CD8-positive, alpha-beta memory T cell (primary cell): ENCODE measurements at regions of chr14 and their contacts with region 1.

Region 1: DNA sequence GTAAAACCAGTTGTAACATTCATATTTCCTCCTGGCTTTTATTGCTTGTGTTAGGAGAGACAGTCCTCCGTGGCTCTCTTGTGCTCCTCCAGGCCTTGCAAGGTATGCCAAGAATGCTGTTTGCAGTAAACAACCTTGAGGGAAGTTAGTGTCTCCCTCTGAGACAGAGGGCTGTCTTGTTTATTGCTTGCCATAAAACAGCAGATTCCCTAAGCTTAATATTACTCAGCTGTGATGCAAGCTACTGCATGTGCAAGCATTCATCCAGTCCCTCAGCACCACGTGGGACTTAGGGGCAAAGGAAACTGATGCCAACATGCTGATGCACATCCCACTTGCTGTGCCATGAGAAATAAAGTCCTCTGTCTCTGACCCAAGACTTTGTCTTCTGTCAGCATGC is 6.6 kb downstream of the POMT2 start:
- DNase-seq: no peak
- H3K4me3 ChIP-seq: no peak overlapping the region
- H3K4me3 Mint-ChIP-seq: no peak overlapping the region
- H3K27ac ChIP-seq: no peak overlapping the region
- H3K27ac Mint-ChIP-seq: no peak overlapping the region
- H3K4me1 ChIP-seq: no peaks in the 10 kb centered on the region
- H3K4me1 Mint-ChIP-seq: peaks cover 0 to under 1% (median 0%) of the 10 kb centered on the region in 3 donors
- H3K27me3 ChIP-seq: no peaks in the 10 kb centered on the region
- H3K27me3 Mint-ChIP-seq: no peaks in the 10 kb centered on the region

Region 2: DNA sequence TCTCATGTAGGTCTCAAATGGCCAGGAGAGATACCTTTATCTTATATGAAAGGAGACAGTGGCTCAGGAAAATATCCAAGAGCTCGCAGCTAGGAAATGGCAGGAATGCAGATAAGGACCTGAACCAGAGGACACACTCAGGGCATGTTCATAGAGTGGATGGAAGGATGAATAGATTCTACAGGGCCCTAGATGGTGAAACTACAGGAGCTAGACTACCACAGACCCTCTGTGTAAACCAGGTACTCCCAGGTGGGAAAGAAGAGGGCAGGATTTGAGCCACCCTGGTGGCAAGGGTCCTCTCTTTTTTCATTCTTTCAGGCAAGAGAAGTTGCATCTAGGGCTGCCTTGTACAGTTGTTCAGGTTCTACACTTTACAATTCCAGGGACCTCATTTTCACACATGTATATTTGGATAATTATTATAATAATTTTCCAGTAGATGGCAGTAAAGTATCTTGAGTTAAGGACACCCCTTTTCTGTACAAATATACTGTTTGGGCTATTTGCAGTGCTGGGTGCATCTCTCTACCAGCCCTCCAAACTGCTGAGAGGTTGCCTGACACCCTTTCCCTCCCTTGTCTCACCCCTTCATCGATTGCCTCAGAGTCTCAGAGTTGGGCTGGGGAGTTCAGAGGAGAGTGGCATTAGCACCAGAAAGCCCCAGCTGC is 162.0 kb before region 1 on chr14:
- CTCF ChIA-PET with region 1: interaction called, 27 read pairs
- POLR2A ChIA-PET with region 1: no interaction called
- DNase-seq: peak in 1 of 5 donors; percentile 10
- H3K4me3 ChIP-seq: no peak overlapping the region
- H3K4me3 Mint-ChIP-seq: no peak overlapping the region
- H3K27ac ChIP-seq: no peak overlapping the region
- H3K27ac Mint-ChIP-seq: peak overlapping the region in 1 of 8 donors; percentile 68
- H3K4me1 ChIP-seq: no peaks in the 10 kb centered on the region
- H3K4me1 Mint-ChIP-seq: no peaks in the 10 kb centered on the region
- H3K27me3 ChIP-seq: no peaks in the 10 kb centered on the region
- H3K27me3 Mint-ChIP-seq: peaks cover 7 to 49% of the 10 kb centered on the region in 2 donors

Region 3: GRCh38 chr14:77301103-77301502 is 12.9 kb before region 1 on chr14:
- CTCF ChIA-PET with region 1: interaction called, 50 read pairs
- POLR2A ChIA-PET with region 1: no interaction called
- DNase-seq: peak in 4 of 5 donors; percentile 6 to 63 (median 16)
- H3K4me3 ChIP-seq: no peak overlapping the region
- H3K4me3 Mint-ChIP-seq: no peak overlapping the region
- H3K27ac ChIP-seq: no peak overlapping the region
- H3K27ac Mint-ChIP-seq: no peak overlapping the region
- H3K4me1 ChIP-seq: no peaks in the 10 kb centered on the region
- H3K4me1 Mint-ChIP-seq: peaks cover 0 to 12% (median 5%) of the 10 kb centered on the region in 3 donors
- H3K27me3 ChIP-seq: no peaks in the 10 kb centered on the region
- H3K27me3 Mint-ChIP-seq: no peaks in the 10 kb centered on the region